Dendritic cell treated with granulocyte-macrophage colony-stimulating factor and Interleukin-4, amounts not matched to agents 40 ng/mL and 50 ng/mL, for 4 days (primary cell): ENCODE measurements at regions of chr11 and their contacts with region 1.

Region 1: DNA sequence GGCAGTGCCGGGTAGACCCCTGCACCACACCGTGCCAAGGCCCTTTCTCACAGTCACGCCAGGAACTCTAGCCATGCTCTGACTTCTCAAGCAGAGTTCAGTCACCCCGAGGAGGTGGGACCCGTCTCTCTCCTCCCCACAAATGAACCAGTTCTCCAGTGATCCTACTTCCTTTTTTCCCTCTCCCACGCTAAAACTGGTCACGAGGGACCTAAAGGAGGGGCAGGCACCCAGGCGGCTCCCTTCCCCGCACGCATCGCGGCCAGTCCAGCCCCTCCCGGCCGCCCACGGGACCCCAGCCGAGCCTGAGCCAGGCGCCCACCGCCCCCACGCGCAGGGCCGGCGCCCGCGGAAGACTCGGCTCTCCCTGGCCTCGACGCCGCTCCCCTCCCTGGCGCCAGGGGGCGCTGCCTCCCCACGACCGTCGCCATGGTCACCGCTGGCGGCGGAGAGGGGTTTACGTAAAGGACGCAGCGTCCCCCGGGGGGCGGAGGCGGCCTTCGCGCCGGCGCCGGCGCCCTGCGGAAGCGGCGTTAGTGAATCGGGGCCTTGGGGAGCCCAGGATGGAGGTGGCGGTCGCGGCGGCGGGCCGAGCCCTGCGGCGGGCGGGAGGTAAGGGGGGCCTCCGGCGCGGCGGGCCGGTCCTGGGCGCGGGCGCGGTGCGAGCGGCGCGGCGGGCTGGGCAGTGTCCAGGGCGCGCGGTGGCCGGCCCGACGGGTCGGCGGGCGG is at the start of gene DAGLA:
- H3K4me3 Mint-ChIP-seq: peak within 1 kb of the TSS; percentile 25
- H3K27ac Mint-ChIP-seq: no peak within 1 kb of the TSS
- H3K4me1 Mint-ChIP-seq: peaks cover 32% of the 10 kb centered on the region
- H3K27me3 Mint-ChIP-seq: peaks cover 17% of the 10 kb centered on the region

Region 2: DNA sequence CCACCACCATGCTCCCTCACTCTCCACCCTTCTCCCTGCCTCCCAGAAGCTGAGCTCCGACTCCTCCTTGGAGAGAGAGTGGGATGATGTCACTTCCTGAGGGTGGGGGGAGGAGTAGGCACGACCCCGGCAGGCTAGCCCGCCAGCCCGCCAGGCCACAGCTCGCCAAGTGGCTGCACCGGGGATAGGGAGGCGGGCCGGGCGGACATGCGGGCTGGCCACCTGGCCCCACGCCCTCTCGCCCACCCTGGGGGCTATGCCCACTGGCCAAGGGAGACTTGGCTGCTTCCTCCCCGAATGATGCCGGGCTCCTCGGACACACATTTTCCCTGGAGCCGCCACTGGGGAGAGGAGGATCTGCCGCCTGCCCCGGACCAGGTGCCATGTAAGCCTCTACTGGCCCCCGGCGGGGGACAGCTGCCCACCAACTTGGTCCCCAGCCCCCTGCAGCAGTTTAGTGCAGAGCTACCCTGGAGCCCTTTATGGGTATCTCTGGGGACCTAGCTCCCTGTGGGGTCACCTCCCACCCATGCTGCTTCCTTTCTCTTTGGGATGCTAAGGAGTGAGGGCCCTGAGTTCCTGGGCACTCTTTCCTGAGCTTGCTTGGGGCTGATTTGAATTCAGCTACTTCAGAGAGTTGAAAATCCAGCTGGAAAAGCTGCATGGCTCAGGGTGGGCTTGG is 38.7 kb after region 1 on chr11:
- intact Hi-C with region 1: loop called (anchors 5 kb)
- H3K4me3 Mint-ChIP-seq: no peak overlapping the region
- H3K27ac Mint-ChIP-seq: peak overlapping the region; percentile 91
- H3K4me1 Mint-ChIP-seq: peaks cover 84% of the 10 kb centered on the region
- H3K27me3 Mint-ChIP-seq: no peaks in the 10 kb centered on the region

Region 3: GRCh38 chr11:61733120-61733978 is 53.3 kb after region 1 on chr11:
- intact Hi-C with region 1: loop called (anchors 5 kb)
- H3K4me3 Mint-ChIP-seq: no peak overlapping the region
- H3K27ac Mint-ChIP-seq: peak overlapping the region; percentile 81
- H3K4me1 Mint-ChIP-seq: peaks cover 33% of the 10 kb centered on the region
- H3K27me3 Mint-ChIP-seq: no peaks in the 10 kb centered on the region